AG04449 (cell line): ENCODE measurements at regions of chr17 and their contacts with region 1.

Region 1: GRCh38 chr17:73311781-73312641 is at the start of gene CDC42EP4:
- DNase-seq: no peak
- H3K4me3 ChIP-seq: peak within 1 kb of the TSS; percentile 96
- CTCF ChIP-seq: no peak

Region 2: DNA sequence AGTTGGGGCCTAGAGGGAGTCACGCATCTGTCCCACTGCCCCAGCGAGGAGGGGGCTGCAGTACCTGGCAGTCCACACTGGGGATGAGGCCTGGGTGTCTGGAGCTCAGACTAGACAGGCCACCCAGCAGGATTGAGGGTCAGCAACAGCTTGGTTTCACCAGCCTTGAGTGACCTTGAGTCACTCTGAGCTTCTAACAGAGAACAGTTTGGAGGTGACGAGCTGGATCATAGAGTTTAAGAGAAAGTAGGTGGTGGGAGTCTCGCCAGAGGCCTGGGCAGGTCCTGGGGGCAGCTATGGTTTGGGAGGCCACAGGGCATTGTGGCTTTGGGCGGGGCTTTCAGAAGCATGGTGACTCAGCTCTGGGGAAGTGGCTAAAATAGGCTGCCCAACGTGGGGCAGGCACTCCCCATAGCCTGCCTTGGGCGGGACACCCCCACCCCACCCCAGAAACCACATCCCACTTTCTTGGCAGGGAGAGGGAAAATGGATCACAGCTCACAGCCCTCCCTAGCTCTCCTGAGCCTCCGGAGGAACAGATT is 20.7 kb before region 1 on chr17:
- CTCF ChIA-PET with region 1: interaction called, 17 read pairs
- POLR2A ChIA-PET with region 1: interaction called, 14 read pairs
- DNase-seq: no peak
- H3K4me3 ChIP-seq: no peak overlapping the region
- CTCF ChIP-seq: no peak

Region 3: GRCh38 chr17:73297934-73298861 is 13.8 kb before region 1 on chr17:
- CTCF ChIA-PET with region 1: interaction called, 12 read pairs
- POLR2A ChIA-PET with region 1: interaction called, 5 read pairs
- DNase-seq: no peak
- H3K4me3 ChIP-seq: no peak overlapping the region
- CTCF ChIP-seq: no peak

Region 4: DNA sequence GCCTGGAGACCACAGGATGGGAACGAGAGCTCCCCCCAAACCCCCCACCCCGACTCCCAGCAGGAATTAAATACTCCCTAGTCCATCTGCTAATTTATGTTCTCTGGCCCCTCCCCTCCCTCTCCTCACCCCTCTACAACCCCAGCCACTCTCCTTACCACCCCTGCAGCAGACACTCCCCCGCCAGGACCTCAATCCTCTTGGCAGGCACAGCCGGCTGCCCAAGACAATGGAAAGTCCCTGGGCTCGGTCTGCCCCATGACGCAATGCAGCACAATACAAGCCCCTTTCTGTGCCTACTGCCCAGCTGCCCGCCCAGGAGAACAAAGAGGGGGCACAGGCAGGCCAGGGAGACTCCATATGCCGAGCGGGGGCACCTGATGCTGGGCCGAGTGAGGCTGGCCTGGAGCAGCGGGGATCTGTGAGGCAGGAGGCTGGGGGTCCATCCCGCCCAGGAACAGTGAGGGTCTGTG is 30.1 kb after region 1 on chr17:
- CTCF ChIA-PET with region 1: interaction called, 33 read pairs
- POLR2A ChIA-PET with region 1: interaction called, 8 read pairs
- DNase-seq: peak; percentile 58
- H3K4me3 ChIP-seq: no peak overlapping the region
- CTCF ChIP-seq: no peak

Region 5: GRCh38 chr17:73365906-73366623 is 54.1 kb after region 1 on chr17:
- CTCF ChIA-PET with region 1: interaction called, 22 read pairs
- POLR2A ChIA-PET with region 1: interaction called, 5 read pairs
- DNase-seq: no peak
- H3K4me3 ChIP-seq: no peak overlapping the region
- CTCF ChIP-seq: no peak

Region 6: GRCh38 chr17:73387746-73388577 is 76.0 kb after region 1 on chr17:
- CTCF ChIA-PET with region 1: no interaction called
- POLR2A ChIA-PET with region 1: no interaction called
- DNase-seq: no peak
- H3K4me3 ChIP-seq: no peak overlapping the region
- CTCF ChIP-seq: no peak